Activated T-helper 2 cell treated with anti-CD3 and anti-CD28 coated beads, Interferon-gamma antibody, Interleukin-2, Interleukin-4, amounts not matched to agents 10 μg/mL and 5 μg/mL and 100 μg/mL, durations not matched to agents 14 hours and 24 hours and 36 hours (primary cell): ENCODE measurements at regions of chr4 and their contacts with region 1.

Region 1: DNA sequence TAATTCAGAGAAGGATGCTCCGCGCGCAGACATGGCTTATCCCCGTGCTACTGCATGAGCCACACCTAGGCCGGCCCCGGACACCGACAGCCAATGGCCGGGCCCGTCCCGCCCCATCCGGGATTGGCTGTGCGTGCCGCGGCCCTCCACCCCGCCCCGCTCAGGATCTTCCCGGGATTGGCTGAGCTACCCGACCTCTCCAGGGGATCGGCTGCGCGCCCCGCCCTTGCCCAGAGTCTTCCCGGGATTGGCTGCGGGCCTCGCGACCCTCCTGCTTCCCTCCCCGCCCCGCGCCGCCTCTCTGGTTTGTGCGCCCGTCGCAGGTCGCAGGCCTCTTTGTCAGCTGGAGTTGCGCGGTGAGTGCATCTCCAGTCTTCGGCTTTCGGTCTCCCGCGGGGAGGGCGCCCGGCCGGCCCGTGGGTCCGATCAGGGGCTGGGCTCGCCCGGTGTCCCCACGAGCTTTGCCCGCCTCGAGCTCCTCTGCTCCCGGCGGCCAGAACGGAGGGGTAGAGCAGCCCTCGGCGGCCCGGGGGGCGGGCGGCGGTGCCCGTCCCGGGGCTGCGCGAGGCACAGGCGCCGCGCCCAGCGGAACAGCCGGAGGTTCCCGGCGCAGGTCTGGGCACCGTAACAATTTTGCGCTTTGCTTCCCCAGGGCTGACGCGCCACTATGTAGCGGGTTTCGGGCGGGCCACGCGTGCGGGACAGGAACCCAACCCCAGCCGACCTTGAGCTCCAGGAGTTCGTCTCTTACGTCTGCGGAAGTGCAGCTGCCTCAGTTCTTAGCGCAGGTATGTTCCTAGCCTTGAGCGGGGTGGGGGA is 38.8 kb downstream of the ERVMER34-1 start:
- DNase-seq: peak; percentile 97
- H3K4me3 Mint-ChIP-seq: peak overlapping the region; percentile 93
- H3K27ac Mint-ChIP-seq: peak overlapping the region; percentile 94
- H3K4me1 Mint-ChIP-seq: peaks cover 42% of the 10 kb centered on the region
- H3K27me3 Mint-ChIP-seq: no peaks in the 10 kb centered on the region

Region 2: GRCh38 chr4:52038103-52038912 is 674.1 kb before region 1 on chr4 and contains the start of gene SGCB:
- intact Hi-C with region 1: loop called (anchors 10 kb)
- DNase-seq: peak; percentile 66
- H3K4me3 Mint-ChIP-seq: peak within 1 kb of the TSS; percentile 86
- H3K27ac Mint-ChIP-seq: peak within 1 kb of the TSS; percentile 33
- H3K4me1 Mint-ChIP-seq: peaks cover 24% of the 10 kb centered on the region
- H3K27me3 Mint-ChIP-seq: peaks cover 33% of the 10 kb centered on the region
- total RNA-seq, gene SGCB: 21.2 and 21.5 TPM in 2 replicates

Region 3: DNA sequence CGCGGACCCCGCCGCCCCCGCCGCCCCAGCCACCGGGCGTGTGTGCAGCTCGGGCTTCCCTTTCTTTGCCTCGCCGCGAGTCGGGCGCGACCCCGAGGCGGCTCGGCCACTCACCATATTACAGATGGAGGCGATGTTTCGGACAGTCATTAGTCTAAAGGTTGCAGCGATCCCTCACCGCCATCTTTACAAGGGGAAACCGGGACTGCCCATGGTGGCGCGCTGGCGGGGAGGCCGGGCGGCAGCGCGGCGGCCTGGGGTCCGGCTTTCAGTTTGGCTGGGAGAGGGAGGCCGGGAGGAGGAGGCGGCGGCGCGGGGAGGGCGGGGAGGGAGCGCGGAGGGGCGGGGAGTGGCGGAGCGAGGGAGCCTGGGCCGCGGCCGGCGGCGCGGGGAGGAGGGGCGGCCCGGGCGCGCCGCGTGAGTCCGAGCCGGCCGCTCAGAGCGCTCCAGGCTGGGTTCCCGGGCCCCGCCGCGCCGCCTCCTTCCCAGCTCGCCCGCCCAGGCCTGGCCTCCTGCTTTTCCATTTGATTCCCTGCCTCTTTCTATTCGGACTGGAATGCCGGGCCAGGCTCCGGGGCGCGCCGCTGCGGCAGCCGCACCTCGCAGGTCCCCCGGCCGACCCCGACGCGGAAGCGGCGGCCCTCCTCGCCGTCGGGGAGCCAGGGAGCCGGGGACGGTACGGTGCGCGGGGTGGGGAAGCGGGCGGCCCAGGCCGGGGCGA is 53.2 kb before region 1 on chr4 and contains the start of gene USP46:
- intact Hi-C with region 1: loop called (anchors 2 kb)
- DNase-seq: peak; percentile 28
- H3K4me3 Mint-ChIP-seq: peak within 1 kb of the TSS; percentile 82
- H3K27ac Mint-ChIP-seq: peak within 1 kb of the TSS; percentile 62
- H3K4me1 Mint-ChIP-seq: peaks cover 15% of the 10 kb centered on the region
- H3K27me3 Mint-ChIP-seq: peaks cover 10% of the 10 kb centered on the region
- total RNA-seq, gene USP46: 7.7 and 8.9 TPM in 2 replicates

Region 4: GRCh38 chr4:53132132-53132896 is 419.9 kb after region 1 on chr4:
- intact Hi-C with region 1: loop called (anchors 10 kb)
- DNase-seq: no peak
- H3K4me3 Mint-ChIP-seq: no peak overlapping the region
- H3K27ac Mint-ChIP-seq: peak overlapping the region; percentile 84
- H3K4me1 Mint-ChIP-seq: peaks cover 24% of the 10 kb centered on the region
- H3K27me3 Mint-ChIP-seq: no peaks in the 10 kb centered on the region